ENCODE measurements at regions of chr4 and their contacts with region 1.

Region 1: DNA sequence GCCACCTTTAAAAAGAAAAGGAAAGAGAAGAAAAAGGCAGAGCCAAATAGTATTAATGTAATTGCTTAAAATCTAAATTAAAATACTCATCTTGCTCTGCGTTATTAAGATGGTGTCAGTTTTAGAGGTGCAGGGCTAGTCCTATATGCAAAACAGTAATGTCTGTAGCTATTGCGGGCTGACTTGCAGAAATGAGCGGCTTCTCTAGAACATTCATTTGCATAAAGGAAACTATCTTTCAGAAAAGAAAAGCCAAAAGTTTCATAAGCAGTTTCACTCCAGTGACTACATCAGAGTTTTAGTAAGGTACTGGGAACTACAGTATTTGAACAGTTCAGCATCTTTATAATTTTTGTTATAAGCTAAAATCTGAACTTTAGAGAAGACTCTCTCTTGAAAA is 6.0 kb downstream of the SMAD1 start:
- DNase-seq: peak; percentile 44
- H3K4me3 Mint-ChIP-seq: no peak overlapping the region
- H3K27ac Mint-ChIP-seq: no peak overlapping the region
- H3K4me1 Mint-ChIP-seq: peaks cover 8% of the 10 kb centered on the region
- H3K27me3 Mint-ChIP-seq: peaks cover 19% of the 10 kb centered on the region

Region 2: DNA sequence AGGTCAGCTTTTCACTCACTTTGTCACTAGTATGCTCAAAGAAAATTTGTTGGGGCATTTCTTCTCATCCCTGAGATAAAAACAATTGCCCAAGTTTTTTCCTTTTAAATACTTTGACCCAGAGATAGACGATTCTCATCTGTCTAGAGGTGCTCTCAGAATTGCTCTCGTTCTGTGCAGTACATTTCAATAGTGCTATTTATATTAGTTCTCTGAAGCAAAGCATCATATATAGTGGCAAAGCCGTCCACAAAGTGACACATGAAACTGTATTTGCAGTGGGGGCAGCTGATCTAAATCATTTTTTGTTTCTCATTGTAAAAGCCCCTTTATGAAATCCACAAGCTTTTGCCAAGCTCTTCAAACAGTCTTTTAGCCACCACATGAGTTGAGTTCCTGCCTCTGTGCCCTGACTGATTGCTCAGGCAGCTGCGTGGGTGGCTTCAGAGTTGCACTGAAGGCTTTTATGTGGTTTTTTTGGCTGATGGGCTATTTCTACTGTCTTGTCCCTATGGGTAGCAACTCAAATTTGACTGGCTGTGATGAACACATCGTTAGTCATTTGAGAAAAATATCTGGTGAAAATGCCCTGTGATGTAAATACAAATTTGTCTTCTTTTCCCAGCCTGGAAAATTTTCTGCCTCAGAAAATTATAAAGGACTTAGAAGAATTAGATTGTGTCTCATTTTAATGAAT is 188.1 kb before region 1 on chr4:
- CTCF ChIA-PET with region 1: no interaction called
- POLR2A ChIA-PET with region 1: no interaction called
- intact Hi-C with region 1: loop called (anchors 2 kb)
- DNase-seq: peak; percentile 86
- H3K4me3 Mint-ChIP-seq: no peak overlapping the region
- H3K27ac Mint-ChIP-seq: no peak overlapping the region
- H3K4me1 Mint-ChIP-seq: peaks cover 17% of the 10 kb centered on the region
- H3K27me3 Mint-ChIP-seq: peaks cover 22% of the 10 kb centered on the region

Region 3: GRCh38 chr4:145920205-145920604 is 432.6 kb after region 1 on chr4:
- CTCF ChIA-PET with region 1: no interaction called
- POLR2A ChIA-PET with region 1: no interaction called
- intact Hi-C with region 1: no loop called
- DNase-seq: no peak
- H3K4me3 Mint-ChIP-seq: no peak overlapping the region
- H3K27ac Mint-ChIP-seq: no peak overlapping the region
- H3K4me1 Mint-ChIP-seq: peaks cover 24% of the 10 kb centered on the region
- H3K27me3 Mint-ChIP-seq: no peaks in the 10 kb centered on the region